ENCODE measurements at regions of chr22 and their contacts with region 1.

Region 1: GRCh38 chr22:40679964-40680818 is 907 bp downstream of the MCHR1 start:
- DNase-seq: no peak
- ATAC-seq: peak; percentile 16; the same call in 2 of the 3 replicates
- H3K4me3 ChIP-seq: peak overlapping the region in 2 of 3 experiments; percentile 50 to 70; a peak in 3 of 6 replicates
- H3K27ac ChIP-seq: no peak overlapping the region
- H3K4me1 ChIP-seq: peaks cover 54% of the 10 kb centered on the region
- H3K27me3 ChIP-seq: peaks cover 0 to 22% of the 10 kb centered on the region in 2 experiments
- CTCF ChIP-seq: peak; percentile 45
- EP300 ChIP-seq: no peak
- POLR2A ChIP-seq: no peak
- RAD21 ChIP-seq: no peak

Region 2: GRCh38 chr22:40645579-40646197 is 34.5 kb before region 1 on chr22:
- CTCF ChIA-PET with region 1: no interaction called
- POLR2A ChIA-PET with region 1: no interaction called
- in situ Hi-C with region 1: no loop called
- intact Hi-C with region 1: no loop called
- DNase-seq: no peak
- ATAC-seq: no peak
- H3K4me3 ChIP-seq: peak overlapping the region in 1 of 3 experiments; percentile 47; a peak in 1 of 6 replicates
- H3K27ac ChIP-seq: peak overlapping the region; percentile 79
- H3K4me1 ChIP-seq: peaks cover 28% of the 10 kb centered on the region
- H3K27me3 ChIP-seq: no peaks in the 10 kb centered on the region
- CTCF ChIP-seq: no peak
- EP300 ChIP-seq: no peak
- POLR2A ChIP-seq: no peak
- RAD21 ChIP-seq: no peak

Region 3: DNA sequence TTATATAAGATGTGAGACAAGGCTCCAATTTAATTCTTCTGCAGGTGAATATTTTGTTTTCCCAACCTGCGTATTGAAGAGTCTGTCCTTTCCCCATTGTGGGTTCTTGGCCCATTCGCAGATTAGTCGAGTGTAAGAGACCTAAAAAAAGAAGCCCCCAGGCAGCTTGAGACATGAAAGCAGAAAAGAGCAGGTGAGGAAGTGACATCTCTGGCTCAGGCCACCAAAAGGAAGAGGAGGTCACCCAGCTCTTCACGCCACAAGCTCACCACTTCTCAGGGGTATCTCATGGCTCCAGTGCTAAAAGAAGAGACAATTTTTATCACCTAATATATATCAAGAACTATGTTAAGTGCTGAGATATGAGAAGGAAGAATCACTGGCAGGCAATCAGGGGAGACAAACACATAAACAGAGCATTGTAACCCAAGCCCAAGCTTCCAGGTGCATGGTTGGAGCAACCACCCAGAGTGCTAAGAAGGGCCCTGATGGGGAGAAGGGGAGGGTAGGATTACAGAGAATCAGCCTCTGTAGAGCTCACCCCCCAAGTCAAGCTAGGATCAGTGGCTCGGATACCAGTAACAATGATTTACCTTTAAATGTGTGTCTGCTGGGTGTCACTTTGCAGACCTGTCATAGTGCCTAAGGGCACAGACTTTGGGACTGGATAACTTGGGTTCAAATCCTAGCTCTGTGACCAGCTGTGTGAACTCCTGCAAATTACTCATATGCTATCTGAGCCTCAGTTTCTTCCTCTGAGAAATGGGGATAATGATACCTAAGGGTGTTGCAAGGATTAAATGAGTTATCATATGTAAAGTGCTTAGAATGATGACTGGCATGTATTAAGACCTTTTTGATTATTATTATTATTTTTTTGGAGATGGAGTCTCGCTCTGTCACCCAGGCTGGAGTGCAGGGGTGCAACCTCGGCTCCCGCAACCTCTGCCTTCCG is 38.3 kb after region 1 on chr22:
- CTCF ChIA-PET with region 1: no interaction called
- POLR2A ChIA-PET with region 1: no interaction called
- in situ Hi-C with region 1: no loop called
- intact Hi-C with region 1: loop called (anchors 5 kb)
- DNase-seq: no peak
- ATAC-seq: no peak
- H3K4me3 ChIP-seq: no peak overlapping the region
- H3K27ac ChIP-seq: no peak overlapping the region
- H3K4me1 ChIP-seq: peaks cover 54% of the 10 kb centered on the region
- H3K27me3 ChIP-seq: peaks cover 0 to 4% of the 10 kb centered on the region in 2 experiments; a peak in 2 of 5 replicates
- CTCF ChIP-seq: no peak
- EP300 ChIP-seq: no peak
- POLR2A ChIP-seq: no peak
- RAD21 ChIP-seq: no peak

Region 4: GRCh38 chr22:40757071-40757470 is 76.9 kb after region 1 on chr22:
- CTCF ChIA-PET with region 1: interaction called, 34 read pairs
- POLR2A ChIA-PET with region 1: no interaction called
- in situ Hi-C with region 1: loop called (anchors 5 kb)
- intact Hi-C with region 1: loop called (anchors 1 kb)
- DNase-seq: no peak
- ATAC-seq: no peak
- H3K4me3 ChIP-seq: no peak overlapping the region
- H3K27ac ChIP-seq: no peak overlapping the region
- H3K4me1 ChIP-seq: peaks cover 9% of the 10 kb centered on the region
- H3K27me3 ChIP-seq: no peaks in the 10 kb centered on the region; a peak in 1 of 5 replicates
- CTCF ChIP-seq: no peak
- EP300 ChIP-seq: no peak
- POLR2A ChIP-seq: no peak
- RAD21 ChIP-seq: no peak

Region 5: DNA sequence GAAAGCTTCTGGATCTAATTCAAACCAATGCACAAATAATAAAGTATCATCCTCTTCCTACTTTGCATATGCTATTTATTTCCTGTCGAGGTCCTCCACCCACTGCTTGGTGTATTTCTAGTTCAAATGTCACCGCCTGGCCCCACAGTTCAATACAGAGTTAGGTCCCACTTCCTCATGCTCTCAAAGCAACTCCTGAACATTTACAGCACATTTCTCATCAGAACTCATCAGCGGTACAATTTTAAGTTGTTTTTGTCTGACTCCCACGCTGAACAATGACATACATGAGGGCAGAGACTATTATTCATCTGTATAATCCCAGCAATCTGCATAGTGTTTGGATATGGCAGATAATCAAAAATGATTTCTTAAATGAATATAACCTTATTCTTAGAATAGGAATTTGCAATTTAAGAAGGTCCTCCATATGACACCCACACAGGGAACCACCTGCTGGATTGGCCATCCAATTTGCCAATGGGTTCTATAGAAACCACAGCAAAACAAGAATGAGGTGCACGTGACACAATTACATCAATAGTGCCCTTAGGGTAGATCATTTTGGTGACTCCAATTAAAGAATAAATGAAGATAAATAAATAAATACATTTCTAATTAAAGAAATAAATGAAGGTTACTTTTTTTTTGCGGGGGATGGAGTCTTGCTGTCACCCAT is 84.7 kb after region 1 on chr22:
- CTCF ChIA-PET with region 1: interaction called, 34 read pairs
- POLR2A ChIA-PET with region 1: no interaction called
- in situ Hi-C with region 1: no loop called
- intact Hi-C with region 1: loop called (anchors 1 kb)
- DNase-seq: no peak
- ATAC-seq: no peak
- H3K4me3 ChIP-seq: no peak overlapping the region
- H3K27ac ChIP-seq: no peak overlapping the region
- H3K4me1 ChIP-seq: no peaks in the 10 kb centered on the region
- H3K27me3 ChIP-seq: no peaks in the 10 kb centered on the region
- CTCF ChIP-seq: no peak
- EP300 ChIP-seq: no peak
- POLR2A ChIP-seq: no peak
- RAD21 ChIP-seq: no peak

Region 6: DNA sequence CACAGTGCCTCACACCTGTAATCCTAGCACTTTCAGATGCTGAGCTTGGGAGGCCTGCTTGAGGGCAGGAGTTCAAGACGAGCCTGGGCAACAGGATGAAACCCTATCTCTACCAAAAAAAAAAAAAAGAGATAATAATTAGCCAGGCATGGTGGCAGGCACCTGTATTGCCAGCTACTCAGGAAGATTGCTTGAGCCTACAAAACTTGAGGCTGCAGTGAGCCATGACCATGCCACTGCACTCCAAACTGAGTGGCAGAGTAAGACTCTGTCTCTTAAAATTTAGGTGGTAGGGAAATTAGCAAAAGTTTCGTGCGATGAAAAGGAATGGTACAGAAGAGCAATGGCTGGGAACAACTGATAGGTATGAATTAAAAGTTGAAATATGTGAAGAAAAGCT is 158.3 kb after region 1 on chr22:
- CTCF ChIA-PET with region 1: no interaction called
- POLR2A ChIA-PET with region 1: no interaction called
- in situ Hi-C with region 1: no loop called
- intact Hi-C with region 1: no loop called
- DNase-seq: no peak
- ATAC-seq: no peak
- H3K4me3 ChIP-seq: no peak overlapping the region
- H3K27ac ChIP-seq: no peak overlapping the region
- H3K4me1 ChIP-seq: peaks cover 8% of the 10 kb centered on the region
- H3K27me3 ChIP-seq: no peaks in the 10 kb centered on the region
- CTCF ChIP-seq: no peak
- EP300 ChIP-seq: no peak
- POLR2A ChIP-seq: no peak
- RAD21 ChIP-seq: no peak

Region 7: GRCh38 chr22:40898850-40899357 is 218.7 kb after region 1 on chr22:
- CTCF ChIA-PET with region 1: no interaction called
- POLR2A ChIA-PET with region 1: no interaction called
- in situ Hi-C with region 1: loop called (anchors 10 kb)
- intact Hi-C with region 1: loop called (anchors 2 kb)
- DNase-seq: peak; percentile 62
- ATAC-seq: no peak; the same call in 2 of the 3 replicates
- H3K4me3 ChIP-seq: no peak overlapping the region
- H3K27ac ChIP-seq: no peak overlapping the region
- H3K4me1 ChIP-seq: no peaks in the 10 kb centered on the region
- H3K27me3 ChIP-seq: no peaks in the 10 kb centered on the region
- CTCF ChIP-seq: peak; percentile 72
- EP300 ChIP-seq: no peak
- POLR2A ChIP-seq: no peak
- RAD21 ChIP-seq: peak; percentile 58; the same call in 1 of the 2 replicates

Measured in HepG2 (cell line).